ENCODE measurements at regions of chr1 and their contacts with region 1.

Region 1: DNA sequence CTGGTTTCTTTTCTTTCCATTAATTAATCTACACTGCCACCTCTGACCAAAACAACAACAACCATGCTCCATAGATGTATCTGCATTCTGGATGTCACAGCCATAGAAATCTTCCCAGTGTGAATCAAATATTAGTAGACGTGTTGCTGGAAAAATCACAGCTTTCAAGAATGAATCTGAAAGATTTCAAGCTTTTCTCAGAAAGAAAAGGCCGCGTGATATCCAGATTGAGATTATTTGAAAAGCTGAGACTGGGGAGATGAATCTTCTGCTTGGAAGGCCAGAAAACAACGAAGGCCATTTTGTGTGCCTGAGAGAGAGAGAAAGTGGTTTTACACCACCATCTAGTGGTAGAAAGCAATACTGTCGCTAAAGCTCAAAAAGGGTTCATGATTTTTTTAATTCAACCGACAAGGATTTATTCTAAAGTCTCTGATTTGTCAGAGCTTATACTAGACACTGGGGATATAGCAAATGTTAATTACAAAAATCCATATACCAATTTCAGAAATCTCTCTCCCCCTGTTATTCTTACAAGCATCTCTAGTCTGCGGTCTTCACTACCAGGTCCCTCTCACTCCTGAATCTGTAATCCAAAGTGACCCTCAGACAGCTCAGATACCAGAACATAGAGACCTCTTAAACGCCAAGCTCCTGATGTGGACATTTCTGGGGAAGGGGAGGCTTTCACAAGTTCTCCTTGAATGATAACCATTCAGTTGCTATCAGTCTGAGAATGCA is 87.5 kb upstream of the SGIP1 start:
- DNase-seq: no peak
- H3K4me3 ChIP-seq: no peak overlapping the region
- H3K27ac ChIP-seq: peak overlapping the region in 3 of 4 donors; percentile 38 to 61 (median 60)
- H3K4me1 ChIP-seq: peaks cover 0 to 12% (median 3%) of the 10 kb centered on the region in 3 donors
- H3K27me3 ChIP-seq: no peaks in the 10 kb centered on the region
- CTCF ChIP-seq: peak; percentile 76 to 95 (median 88)
- POLR2A ChIP-seq: no peak

Region 2: DNA sequence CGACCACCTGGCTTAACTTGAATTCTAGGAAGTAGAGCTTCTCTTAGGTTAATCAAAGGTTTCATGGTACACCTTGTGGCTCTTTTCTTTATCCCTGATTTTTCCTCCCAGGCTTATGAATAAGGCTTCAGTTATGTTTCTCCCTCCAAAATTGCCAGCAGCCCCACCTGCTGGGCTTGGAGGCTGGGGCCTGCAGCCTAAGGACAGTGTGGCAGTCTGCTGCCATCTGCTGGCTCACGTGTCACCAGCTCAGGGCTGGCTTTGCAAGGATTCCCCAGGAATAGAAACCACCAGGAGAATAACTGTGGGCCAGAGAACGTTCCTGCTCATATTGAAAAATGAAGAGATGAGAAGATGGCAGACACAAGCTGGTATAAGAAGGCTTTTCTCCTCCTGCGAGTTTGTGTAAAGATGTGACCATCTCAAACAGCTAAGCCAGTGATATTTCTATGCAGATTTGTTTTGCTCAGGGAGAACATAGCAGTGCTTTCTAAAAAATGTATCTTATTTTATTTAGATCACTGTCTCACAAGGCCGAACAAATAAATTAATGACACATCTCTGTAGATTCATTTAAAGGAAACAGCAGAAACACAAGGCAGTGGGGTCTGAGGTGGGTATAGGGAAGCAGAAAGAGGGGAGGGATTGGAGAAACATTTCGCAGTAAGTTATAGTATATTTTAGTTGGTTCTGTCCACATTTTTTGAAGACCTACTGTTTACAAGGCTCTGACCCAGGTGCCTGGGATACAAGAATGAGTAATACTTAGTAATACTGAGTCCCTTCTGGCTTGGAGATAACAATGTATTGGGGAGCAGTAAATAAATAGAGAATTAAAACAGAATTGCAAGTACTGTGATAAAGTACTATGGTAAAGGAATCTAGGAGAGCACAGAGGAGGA is 203.5 kb before region 1 on chr1:
- intact Hi-C with region 1: loop called (anchors 5 kb)
- DNase-seq: peak; percentile 9
- H3K4me3 ChIP-seq: no peak overlapping the region
- H3K27ac ChIP-seq: no peak overlapping the region
- H3K4me1 ChIP-seq: peaks cover 0 to 6% (median 0%) of the 10 kb centered on the region in 3 donors
- H3K27me3 ChIP-seq: no peaks in the 10 kb centered on the region
- CTCF ChIP-seq: peak; percentile 90 to 98 (median 96)
- POLR2A ChIP-seq: no peak